ENCODE measurements at regions of chr2 and their contacts with region 1.

Region 1: GRCh38 chr2:71276311-71277146 is 49.6 kb upstream of the PAIP2B start:
- DNase-seq: peak; percentile 88 to 97 (median 93)
- H3K4me3 ChIP-seq: peak overlapping the region; percentile 43 to 89 (median 75)
- H3K27ac ChIP-seq: peak overlapping the region; percentile 6 to 98 (median 92)
- H3K27me3 ChIP-seq: no peaks in the 10 kb centered on the region
- CTCF ChIP-seq: peak in 27 of 56 donors; percentile 1 to 53 (median 25)

Region 2: DNA sequence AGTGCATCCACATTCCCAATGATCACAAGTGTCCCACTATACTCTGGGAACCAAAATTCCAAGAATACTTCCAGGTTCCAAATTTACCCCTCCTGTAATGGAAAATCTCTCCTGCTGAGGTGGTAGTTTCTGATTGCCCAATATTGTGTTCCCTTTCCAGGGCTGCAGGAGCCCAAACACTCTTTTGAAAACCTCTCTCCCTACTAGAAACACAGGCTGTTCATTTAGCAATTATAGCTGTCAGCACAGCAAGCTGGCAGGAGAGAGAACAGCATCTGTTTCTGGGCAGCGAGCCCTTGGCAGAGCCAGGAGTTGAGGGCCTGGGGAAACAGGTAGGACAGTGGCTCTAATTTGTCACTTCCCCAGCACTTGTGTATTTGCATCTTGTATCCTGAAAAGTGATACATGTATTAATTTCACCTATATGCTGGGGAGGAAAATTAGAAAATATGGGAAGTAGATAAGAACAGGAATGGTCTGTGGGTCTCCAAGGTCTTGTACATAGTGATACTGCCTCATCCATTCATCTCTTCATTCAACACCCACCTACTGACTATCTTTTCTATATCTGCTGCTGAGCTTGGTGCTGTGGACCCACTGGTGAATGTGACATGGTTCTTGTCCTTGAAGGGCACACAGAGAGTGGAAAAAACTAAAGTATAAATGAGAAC is 32.8 kb before region 1 on chr2:
- intact Hi-C with region 1: loop called in 1 of 2 experiments (anchors 5 kb)
- DNase-seq: peak in 7 of 10 donors; percentile 6 to 74 (median 41)
- H3K4me3 ChIP-seq: no peak overlapping the region
- H3K27ac ChIP-seq: peak overlapping the region in 13 of 59 donors; percentile 1 to 38 (median 15)
- H3K27me3 ChIP-seq: no peaks in the 10 kb centered on the region
- CTCF ChIP-seq: no peak

Region 3: DNA sequence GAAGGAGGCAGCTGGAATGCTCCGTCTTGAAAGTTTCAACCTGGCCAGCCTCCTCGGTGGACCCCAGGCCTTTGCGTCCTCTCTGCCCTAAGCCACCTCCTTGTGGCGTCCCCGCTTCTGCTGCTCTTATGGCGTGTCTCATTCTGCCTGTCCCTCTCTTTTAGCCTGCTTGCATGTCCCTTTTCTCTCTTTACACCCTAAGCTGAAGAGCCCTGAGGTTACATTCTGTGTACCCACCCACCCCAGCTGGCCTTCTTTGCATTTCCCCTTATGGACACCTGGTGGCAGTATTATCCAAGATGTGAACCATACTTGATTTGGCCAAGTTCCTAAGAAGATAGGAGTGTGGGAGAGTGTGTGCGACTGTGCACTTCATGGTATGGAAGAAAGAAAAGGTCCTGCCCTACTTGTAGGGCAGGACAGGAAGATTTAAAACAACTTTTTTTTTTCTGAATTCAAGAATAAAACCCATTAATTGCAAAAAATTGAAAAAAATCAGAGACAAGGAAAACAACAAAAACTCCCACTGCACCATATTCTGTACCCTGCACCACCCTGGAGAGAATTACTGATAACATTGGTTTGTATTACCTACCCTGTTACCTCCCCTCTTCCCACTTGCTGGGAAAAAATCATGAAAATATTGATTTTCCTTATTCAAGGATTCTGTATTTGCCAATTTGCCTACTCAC is 254.3 kb after region 1 on chr2:
- intact Hi-C with region 1: no loop called
- DNase-seq: peak in 1 of 10 donors; percentile 20
- H3K4me3 ChIP-seq: no peak overlapping the region
- H3K27ac ChIP-seq: no peak overlapping the region
- H3K27me3 ChIP-seq: peaks cover 0 to 6% (median 0%) of the 10 kb centered on the region in 45 donors
- CTCF ChIP-seq: peak; percentile 33 to 79 (median 64)

Measured in dorsolateral prefrontal cortex (tissue), 120 donors.